ENCODE measurements at regions of chr15 and their contacts with region 1.

Region 1: DNA sequence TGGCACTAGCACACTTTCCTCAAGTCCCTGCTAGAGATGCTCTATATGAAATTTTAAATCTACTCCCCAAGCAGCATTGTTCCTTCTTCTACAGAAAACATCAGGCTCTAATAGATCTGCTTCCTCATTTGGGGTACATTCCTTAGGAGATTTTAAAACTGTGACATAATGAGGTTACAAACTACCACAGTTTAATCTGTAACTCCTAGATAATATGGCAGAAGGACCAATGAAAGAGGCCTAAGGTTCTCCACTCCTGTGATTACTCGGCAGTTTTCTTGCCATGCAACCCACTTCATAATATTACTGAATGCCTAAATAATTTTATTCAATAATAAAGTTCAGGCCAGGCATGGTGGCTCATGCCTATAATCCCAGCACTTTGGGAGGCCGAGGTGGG is 16.1 kb downstream of the ZNF106 start:
- DNase-seq: no peak
- H3K4me3 Mint-ChIP-seq: no peak overlapping the region
- H3K27ac Mint-ChIP-seq: no peak overlapping the region
- H3K4me1 Mint-ChIP-seq: no peaks in the 10 kb centered on the region
- H3K27me3 Mint-ChIP-seq: no peaks in the 10 kb centered on the region
- CTCF ChIP-seq: no peak

Region 2: GRCh38 chr15:42065033-42065432 is 409.8 kb before region 1 on chr15:
- CTCF ChIA-PET with region 1: no interaction called
- intact Hi-C with region 1: loop called (anchors 5 kb)
- DNase-seq: no peak
- H3K4me3 Mint-ChIP-seq: no peak overlapping the region
- H3K27ac Mint-ChIP-seq: no peak overlapping the region
- H3K4me1 Mint-ChIP-seq: peaks cover 9% of the 10 kb centered on the region
- H3K27me3 Mint-ChIP-seq: no peaks in the 10 kb centered on the region
- CTCF ChIP-seq: no peak

Measured in Calu3 (cell line).